GM23248 (cell line): ENCODE measurements at regions of chr17 and their contacts with region 1.

Region 1: GRCh38 chr17:21742326-21742725 is 50.0 kb downstream of the KCNJ18 start:
- DNase-seq: no peak
- H3K4me3 ChIP-seq: no peak overlapping the region
- H3K27ac ChIP-seq: no peak overlapping the region
- H3K4me1 ChIP-seq: no peaks in the 10 kb centered on the region
- H3K27me3 ChIP-seq: no peaks in the 10 kb centered on the region

Region 2: GRCh38 chr17:21551081-21551881 is 191.0 kb before region 1 on chr17:
- in situ Hi-C with region 1: loop called (anchors 25 kb)
- DNase-seq: peak; percentile 95
- H3K4me3 ChIP-seq: peak overlapping the region; percentile 76
- H3K27ac ChIP-seq: peak overlapping the region; percentile 86
- H3K4me1 ChIP-seq: peaks cover 23% of the 10 kb centered on the region
- H3K27me3 ChIP-seq: no peaks in the 10 kb centered on the region